ENCODE measurements at regions of chr17 and their contacts with region 1.

Region 1: DNA sequence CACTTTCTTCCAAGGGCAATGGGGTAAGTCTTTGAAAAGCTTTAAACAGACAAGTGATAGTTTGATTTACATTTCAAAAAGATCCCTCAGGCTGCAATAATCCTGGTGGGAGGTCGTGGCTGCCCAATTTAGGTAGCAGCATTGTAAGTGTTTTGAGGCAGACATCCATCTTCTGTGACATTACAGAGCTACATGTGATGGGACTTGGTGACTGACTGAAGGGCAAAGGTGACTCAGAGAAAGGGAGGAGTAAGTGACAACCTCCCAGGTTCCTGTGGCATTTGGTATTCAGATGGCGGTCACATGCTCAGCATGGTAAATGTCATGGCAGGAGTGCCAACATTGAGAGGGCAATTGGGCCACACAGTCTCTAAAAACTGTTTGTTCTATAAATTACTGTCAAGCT is 26.5 kb downstream of the STAT3 start:
- DNase-seq: no peak
- H3K4me3 ChIP-seq: no peak overlapping the region
- H3K27ac ChIP-seq: no peak overlapping the region
- H3K4me1 ChIP-seq: no peaks in the 10 kb centered on the region
- H3K27me3 ChIP-seq: no peaks in the 10 kb centered on the region
- CTCF ChIP-seq: no peak

Region 2: DNA sequence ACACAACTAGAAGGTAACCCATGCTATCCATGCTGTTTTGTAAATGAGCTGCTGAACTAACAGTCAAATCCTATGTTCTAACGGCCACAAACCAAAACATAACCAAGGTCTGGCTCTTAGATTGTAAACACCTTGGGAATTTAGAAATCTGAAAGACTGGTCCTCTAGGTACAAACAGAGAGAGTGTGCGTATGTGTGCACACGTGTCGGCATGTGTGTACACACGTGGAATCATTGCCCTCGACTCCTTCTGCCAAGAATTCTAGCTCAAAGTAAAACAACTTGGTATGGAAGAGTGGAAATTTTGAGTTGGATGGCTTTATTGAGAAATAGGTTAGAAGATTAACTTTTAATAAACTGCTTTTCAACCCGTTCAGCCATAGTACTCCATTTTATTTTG is 149.4 kb before region 1 on chr17:
- CTCF ChIA-PET with region 1: no interaction called
- POLR2A ChIA-PET with region 1: no interaction called
- intact Hi-C with region 1: no loop called
- DNase-seq: no peak
- H3K4me3 ChIP-seq: no peak overlapping the region
- H3K27ac ChIP-seq: no peak overlapping the region
- H3K4me1 ChIP-seq: no peaks in the 10 kb centered on the region
- H3K27me3 ChIP-seq: no peaks in the 10 kb centered on the region
- CTCF ChIP-seq: no peak

Region 3: GRCh38 chr17:42485680-42486079 is 123.9 kb after region 1 on chr17:
- CTCF ChIA-PET with region 1: no interaction called
- POLR2A ChIA-PET with region 1: interaction called, 16 read pairs
- intact Hi-C with region 1: no loop called
- DNase-seq: no peak
- H3K4me3 ChIP-seq: no peak overlapping the region
- H3K27ac ChIP-seq: no peak overlapping the region
- H3K4me1 ChIP-seq: no peaks in the 10 kb centered on the region
- H3K27me3 ChIP-seq: no peaks in the 10 kb centered on the region
- CTCF ChIP-seq: no peak